ENCODE measurements at regions of chr16 and their contacts with region 1.

Region 1: DNA sequence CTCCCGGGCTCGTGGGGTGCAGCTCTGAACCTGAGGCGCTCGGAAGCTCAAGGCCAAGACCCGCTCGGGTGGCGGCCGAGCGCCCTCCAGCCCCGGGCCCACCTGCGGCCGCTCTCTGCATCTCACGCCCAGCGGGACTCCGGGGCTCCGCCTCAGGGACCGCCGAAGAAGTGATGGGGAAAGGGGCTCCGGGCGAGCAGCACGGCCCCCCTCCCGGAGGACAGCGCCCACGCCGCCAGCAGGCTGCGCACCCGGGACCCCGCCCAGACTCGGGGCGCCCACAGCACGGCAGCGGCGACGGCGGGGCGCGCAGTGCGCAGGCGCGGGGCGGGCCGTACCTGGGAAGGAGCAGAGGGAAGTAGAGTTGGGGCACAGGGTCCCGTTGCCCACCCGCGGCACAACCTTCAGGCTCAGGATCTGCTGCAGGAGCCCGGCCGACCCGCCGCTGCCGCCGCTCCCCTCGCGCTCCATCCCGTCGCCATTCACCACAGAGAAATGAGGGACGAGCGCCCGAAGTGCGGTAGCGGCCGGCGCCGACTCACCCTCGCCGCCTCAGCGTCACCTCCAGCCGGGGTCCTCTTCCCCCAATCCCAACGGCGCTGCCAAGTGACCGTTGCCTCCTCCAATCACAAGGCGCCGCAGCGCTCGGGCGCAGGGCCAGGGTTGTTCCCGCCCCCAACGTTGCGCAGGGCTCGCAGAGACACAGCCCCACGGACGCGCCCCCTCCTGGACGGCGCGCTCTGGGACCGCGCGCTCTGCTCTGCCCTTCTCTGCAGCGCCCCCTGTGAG is at the start of gene TMEM170A:
- DNase-seq: peak; percentile 99
- H3K4me3 Mint-ChIP-seq: peak within 1 kb of the TSS; percentile 95
- H3K27ac Mint-ChIP-seq: peak within 1 kb of the TSS; percentile 92
- H3K4me1 Mint-ChIP-seq: peaks cover 32% of the 10 kb centered on the region
- H3K27me3 Mint-ChIP-seq: no peaks in the 10 kb centered on the region
- CTCF ChIP-seq: peak; percentile 99
- total RNA-seq, gene TMEM170A: 20.1 and 21.8 TPM in 2 replicates

Region 2: DNA sequence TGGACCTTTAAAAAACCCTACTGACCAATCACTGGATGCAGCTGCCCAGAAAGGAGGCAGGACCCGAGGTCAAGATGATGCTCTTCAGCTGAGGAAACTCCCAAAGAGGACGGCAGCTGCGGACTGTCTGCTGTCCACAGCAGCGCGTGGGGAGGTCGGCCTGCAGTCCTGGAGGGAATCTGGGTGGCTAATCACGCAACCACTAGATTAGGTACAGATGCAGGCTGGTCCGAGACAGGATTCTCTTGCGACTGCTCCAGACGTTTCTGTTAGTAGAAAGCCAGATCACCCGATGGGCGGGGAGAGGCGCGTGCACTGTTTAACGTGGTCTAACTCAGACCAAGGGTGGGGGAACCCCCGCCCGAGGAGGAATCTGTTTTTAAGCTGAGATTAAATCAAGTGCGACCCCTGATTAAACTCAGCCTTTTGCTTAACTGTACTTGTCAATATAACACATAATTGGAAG is 266.2 kb before region 1 on chr16:
- CTCF ChIA-PET with region 1: interaction called, 15 read pairs
- POLR2A ChIA-PET with region 1: interaction called, 3 read pairs
- intact Hi-C with region 1: loop called (anchors 1 kb)
- DNase-seq: no peak
- H3K4me3 Mint-ChIP-seq: no peak overlapping the region
- H3K27ac Mint-ChIP-seq: no peak overlapping the region
- H3K4me1 Mint-ChIP-seq: no peaks in the 10 kb centered on the region
- H3K27me3 Mint-ChIP-seq: peaks cover 23% of the 10 kb centered on the region
- CTCF ChIP-seq: no peak

Region 3: DNA sequence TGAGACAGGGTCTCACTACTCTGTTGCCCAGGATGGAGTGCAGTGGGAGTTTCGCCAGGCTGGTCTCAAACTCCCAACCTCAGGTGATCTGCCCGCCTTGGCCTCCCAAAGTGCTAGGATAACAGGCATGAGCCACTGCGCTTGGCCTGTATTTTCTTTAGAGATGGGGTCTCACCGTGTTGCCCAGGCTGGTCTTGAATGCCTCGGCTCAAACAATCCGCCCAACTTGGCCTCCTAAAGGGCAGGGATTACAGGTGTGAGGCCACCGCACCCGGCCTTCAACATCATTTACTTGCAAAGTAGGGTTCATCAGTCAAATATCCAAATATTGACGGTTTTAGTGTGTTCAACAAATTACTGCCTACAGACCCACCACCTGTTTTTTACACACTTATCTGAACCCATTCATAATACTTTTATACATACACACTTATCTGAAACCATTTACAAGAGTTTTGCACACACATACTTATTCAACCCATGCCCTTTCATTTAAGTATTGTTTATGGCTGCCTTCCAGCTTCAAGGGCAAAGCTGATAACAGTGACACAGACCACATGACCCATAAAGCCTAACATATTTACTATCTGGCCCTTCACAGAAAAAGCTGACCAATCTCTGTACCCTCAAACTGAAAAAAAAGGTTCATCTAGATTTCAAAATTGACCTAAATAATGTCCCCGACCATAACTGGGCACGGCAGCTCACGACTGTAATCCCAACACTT is 11.7 kb before region 1 on chr16:
- CTCF ChIA-PET with region 1: interaction called, 10 read pairs
- POLR2A ChIA-PET with region 1: interaction called, 4 read pairs
- intact Hi-C with region 1: no loop called
- DNase-seq: no peak
- H3K4me3 Mint-ChIP-seq: no peak overlapping the region
- H3K27ac Mint-ChIP-seq: no peak overlapping the region
- H3K4me1 Mint-ChIP-seq: peaks cover 4% of the 10 kb centered on the region
- H3K27me3 Mint-ChIP-seq: no peaks in the 10 kb centered on the region
- CTCF ChIP-seq: no peak

Region 4: GRCh38 chr16:75486676-75487313 is 22.5 kb after region 1 on chr16:
- CTCF ChIA-PET with region 1: interaction called, 16 read pairs
- POLR2A ChIA-PET with region 1: interaction called, 26 read pairs
- intact Hi-C with region 1: no loop called
- DNase-seq: no peak
- H3K4me3 Mint-ChIP-seq: no peak overlapping the region
- H3K27ac Mint-ChIP-seq: peak overlapping the region; percentile 70
- H3K4me1 Mint-ChIP-seq: peaks cover 36% of the 10 kb centered on the region
- H3K27me3 Mint-ChIP-seq: no peaks in the 10 kb centered on the region
- CTCF ChIP-seq: no peak

Region 5: GRCh38 chr16:75550211-75550662 is 85.9 kb after region 1 on chr16:
- CTCF ChIA-PET with region 1: interaction called, 12 read pairs
- POLR2A ChIA-PET with region 1: interaction called, 12 read pairs
- intact Hi-C with region 1: loop called (anchors 2 kb)
- DNase-seq: peak; percentile 82
- H3K4me3 Mint-ChIP-seq: peak overlapping the region; percentile 43
- H3K27ac Mint-ChIP-seq: no peak overlapping the region
- H3K4me1 Mint-ChIP-seq: no peaks in the 10 kb centered on the region
- H3K27me3 Mint-ChIP-seq: no peaks in the 10 kb centered on the region
- CTCF ChIP-seq: peak; percentile 47

Region 6: DNA sequence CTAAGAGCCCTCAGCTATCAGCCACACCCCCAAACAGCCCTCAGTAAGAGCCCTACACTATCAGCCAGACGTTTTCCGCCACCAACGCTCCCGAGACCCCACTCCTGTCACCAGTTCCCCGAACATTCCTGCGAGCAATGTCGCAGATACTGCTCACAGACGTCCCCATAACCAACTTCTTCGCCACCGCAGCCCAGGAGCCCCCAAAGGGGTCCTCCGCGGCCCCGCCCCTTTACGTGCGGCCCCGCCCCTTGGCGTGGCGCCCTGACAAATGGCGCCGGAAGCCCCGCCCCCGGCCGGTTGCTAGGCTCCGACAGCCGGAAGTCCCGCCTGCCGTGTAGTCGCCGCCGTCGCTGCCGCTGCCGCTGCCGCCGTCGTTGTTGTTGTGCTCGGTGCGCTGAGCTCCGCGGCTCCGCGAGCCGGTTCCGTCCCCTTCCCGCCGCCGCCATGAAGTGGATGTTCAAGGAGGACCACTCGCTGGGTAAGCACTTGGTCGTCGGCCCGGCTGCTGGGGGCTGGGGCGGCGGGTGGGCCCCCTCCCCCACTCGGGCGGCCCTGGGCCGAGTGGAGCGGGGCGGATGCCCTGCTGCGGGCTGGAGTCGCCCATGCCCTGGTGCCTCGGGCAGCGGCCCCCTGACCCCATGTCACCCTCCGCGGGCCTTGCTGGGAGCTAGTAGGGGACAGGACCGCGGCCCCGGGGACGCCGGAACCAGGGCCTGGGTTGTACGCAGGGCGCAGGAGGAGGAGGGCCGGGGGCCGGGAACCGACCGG is 101.9 kb after region 1 on chr16 and contains the start of gene GABARAPL2:
- CTCF ChIA-PET with region 1: interaction called, 14 read pairs
- POLR2A ChIA-PET with region 1: interaction called, 27 read pairs
- intact Hi-C with region 1: no loop called
- DNase-seq: peak; percentile 77
- H3K4me3 Mint-ChIP-seq: peak within 1 kb of the TSS; percentile 83
- H3K27ac Mint-ChIP-seq: peak within 1 kb of the TSS; percentile 80
- H3K4me1 Mint-ChIP-seq: peaks cover 7% of the 10 kb centered on the region
- H3K27me3 Mint-ChIP-seq: peaks cover 13% of the 10 kb centered on the region
- CTCF ChIP-seq: no peak
- total RNA-seq, gene GABARAPL2: 61.5 and 70.5 TPM in 2 replicates

Region 7: GRCh38 chr16:75630052-75630451 is 165.7 kb after region 1 on chr16:
- CTCF ChIA-PET with region 1: no interaction called
- POLR2A ChIA-PET with region 1: no interaction called
- intact Hi-C with region 1: no loop called
- DNase-seq: no peak
- H3K4me3 Mint-ChIP-seq: no peak overlapping the region
- H3K27ac Mint-ChIP-seq: no peak overlapping the region
- H3K4me1 Mint-ChIP-seq: peaks cover 10% of the 10 kb centered on the region
- H3K27me3 Mint-ChIP-seq: no peaks in the 10 kb centered on the region
- CTCF ChIP-seq: no peak

Region 8: GRCh38 chr16:75682308-75682707 is 218.0 kb after region 1 on chr16:
- CTCF ChIA-PET with region 1: no interaction called
- POLR2A ChIA-PET with region 1: no interaction called
- intact Hi-C with region 1: no loop called
- DNase-seq: no peak
- H3K4me3 Mint-ChIP-seq: no peak overlapping the region
- H3K27ac Mint-ChIP-seq: no peak overlapping the region
- H3K4me1 Mint-ChIP-seq: no peaks in the 10 kb centered on the region
- H3K27me3 Mint-ChIP-seq: no peaks in the 10 kb centered on the region
- CTCF ChIP-seq: no peak

Region 9: DNA sequence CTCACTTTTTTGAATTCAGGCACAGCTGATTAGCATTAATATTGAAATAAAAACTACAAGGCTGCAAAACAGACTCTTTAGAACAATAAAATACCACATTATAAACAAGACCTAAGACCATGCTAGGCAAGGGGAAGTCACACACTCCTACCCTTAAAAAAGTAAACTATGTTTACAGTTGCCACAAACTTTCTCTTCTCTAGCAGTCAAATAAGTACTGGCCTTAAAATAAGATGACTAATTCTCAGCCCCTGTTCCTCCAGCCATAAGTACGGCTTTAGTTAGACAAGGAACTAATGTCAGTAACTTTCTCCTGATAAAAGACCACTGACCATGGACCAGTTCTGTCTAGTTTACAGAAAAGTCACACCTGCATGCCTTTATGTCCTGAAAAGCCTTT is 281.5 kb after region 1 on chr16:
- CTCF ChIA-PET with region 1: no interaction called
- POLR2A ChIA-PET with region 1: no interaction called
- intact Hi-C with region 1: no loop called
- DNase-seq: no peak
- H3K4me3 Mint-ChIP-seq: no peak overlapping the region
- H3K27ac Mint-ChIP-seq: no peak overlapping the region
- H3K4me1 Mint-ChIP-seq: no peaks in the 10 kb centered on the region
- H3K27me3 Mint-ChIP-seq: peaks cover 26% of the 10 kb centered on the region
- CTCF ChIP-seq: no peak

Measured in MCF 10A (cell line).